ENCODE measurements at regions of chr2 and their contacts with region 1.

Region 1: DNA sequence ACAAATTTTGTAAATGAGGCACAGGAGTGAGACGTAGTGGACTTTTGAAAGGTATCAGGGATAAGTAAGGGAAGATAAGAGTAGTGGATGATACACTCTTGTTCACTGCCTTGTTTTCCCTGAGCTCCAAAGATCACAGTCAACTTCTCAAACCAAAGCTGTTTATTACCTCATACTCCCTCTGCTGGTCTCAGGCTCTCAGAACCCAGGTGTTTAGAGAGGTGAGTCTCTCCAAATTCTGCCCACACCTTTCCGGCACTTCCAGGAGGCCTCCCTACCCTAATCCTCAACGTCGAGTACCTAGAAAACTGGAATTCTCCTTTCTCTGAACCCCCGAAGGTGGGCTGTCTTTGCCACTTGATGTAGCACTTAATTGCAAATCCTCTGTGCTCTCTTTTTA is 621.1 kb downstream of the BCL11A start:
- DNase-seq: no peak
- ATAC-seq: no peak
- H3K4me3 ChIP-seq: no peak overlapping the region
- H3K4me3 Mint-ChIP-seq: no peak overlapping the region
- H3K27ac ChIP-seq: no peak overlapping the region
- H3K27ac Mint-ChIP-seq: no peak overlapping the region
- H3K4me1 ChIP-seq: no peaks in the 10 kb centered on the region
- H3K4me1 Mint-ChIP-seq: peaks cover 9% of the 10 kb centered on the region
- H3K27me3 ChIP-seq: no peaks in the 10 kb centered on the region
- H3K27me3 Mint-ChIP-seq: no peaks in the 10 kb centered on the region
- CTCF ChIP-seq: no peak

Region 2: DNA sequence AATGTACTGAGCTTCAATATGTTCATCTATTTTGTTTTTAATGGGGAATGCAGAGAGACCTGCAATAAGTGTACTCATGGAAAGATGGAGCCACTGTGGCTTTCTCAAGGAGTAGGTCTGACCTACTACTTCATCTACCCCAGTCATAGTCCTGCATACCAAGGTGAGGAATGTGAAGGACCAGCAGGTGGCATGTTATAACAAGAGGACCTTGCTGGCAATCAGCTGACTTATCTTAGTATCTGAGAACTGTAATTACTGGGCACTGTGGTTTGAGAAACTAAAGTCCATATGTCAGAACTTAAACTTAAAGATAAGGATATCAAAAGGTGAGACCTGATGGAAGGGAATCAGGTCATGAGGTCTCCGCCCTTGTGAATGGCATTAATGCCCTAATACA is 483.1 kb before region 1 on chr2:
- CTCF ChIA-PET with region 1: no interaction called
- POLR2A ChIA-PET with region 1: no interaction called
- intact Hi-C with region 1: loop called in 1 of 2 experiments (anchors 10 kb)
- DNase-seq: peak in 1 of 14 experiments; percentile 5
- ATAC-seq: no peak
- H3K4me3 ChIP-seq: no peak overlapping the region
- H3K4me3 Mint-ChIP-seq: no peak overlapping the region
- H3K27ac ChIP-seq: no peak overlapping the region
- H3K27ac Mint-ChIP-seq: no peak overlapping the region
- H3K4me1 ChIP-seq: no peaks in the 10 kb centered on the region
- H3K4me1 Mint-ChIP-seq: no peaks in the 10 kb centered on the region
- H3K27me3 ChIP-seq: no peaks in the 10 kb centered on the region
- H3K27me3 Mint-ChIP-seq: no peaks in the 10 kb centered on the region
- CTCF ChIP-seq: no peak

Measured in CD4-positive, alpha-beta T cell (primary cell).